ENCODE measurements at regions of chrX and their contacts with region 1.

Region 1: DNA sequence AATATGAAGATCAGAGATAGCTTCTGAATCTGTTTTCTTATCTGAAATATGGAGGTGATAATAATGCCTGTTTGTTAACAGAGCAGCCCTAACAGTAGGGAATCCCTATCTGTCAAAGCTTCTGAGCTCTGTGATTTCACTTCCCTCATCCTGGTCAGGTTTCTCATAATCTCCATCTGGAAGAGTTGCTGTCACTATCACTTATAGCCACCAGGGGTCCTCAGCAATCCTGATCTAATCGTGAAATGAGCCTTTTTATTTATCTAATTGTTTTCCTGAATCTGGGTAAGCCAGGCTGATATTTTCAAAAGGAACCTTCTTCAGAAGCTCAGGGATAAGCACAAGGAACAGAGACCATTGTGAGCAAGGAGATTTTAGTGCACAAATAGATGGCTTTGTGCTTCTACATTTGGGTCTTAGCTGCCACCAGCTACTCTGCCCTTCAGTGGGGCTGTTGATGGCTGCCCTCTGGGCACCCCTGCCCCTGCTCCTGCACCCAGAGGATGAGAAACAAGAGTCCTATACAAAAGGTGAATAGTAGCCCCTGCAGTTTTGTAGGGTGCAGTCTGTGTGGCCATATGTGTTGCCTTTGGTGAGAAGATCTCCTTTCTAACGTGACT is 196.4 kb upstream of the RADX start:
- DNase-seq: peak in 3 of 9 donors; percentile 4 to 17 (median 12)
- ATAC-seq: no peak
- H3K4me3 ChIP-seq: no peak overlapping the region
- H3K4me3 Mint-ChIP-seq: no peak overlapping the region
- H3K27ac ChIP-seq: no peak overlapping the region
- H3K27ac Mint-ChIP-seq: no peak overlapping the region
- H3K4me1 ChIP-seq: no peaks in the 10 kb centered on the region
- H3K4me1 Mint-ChIP-seq: no peaks in the 10 kb centered on the region
- H3K27me3 ChIP-seq: no peaks in the 10 kb centered on the region
- H3K27me3 Mint-ChIP-seq: no peaks in the 10 kb centered on the region

Region 2: GRCh38 chrX:106118786-106119185 is 296.6 kb before region 1 on chrX:
- CTCF ChIA-PET with region 1: no interaction called
- POLR2A ChIA-PET with region 1: no interaction called
- intact Hi-C with region 1: no loop called
- DNase-seq: no peak
- ATAC-seq: no peak
- H3K4me3 ChIP-seq: no peak overlapping the region
- H3K4me3 Mint-ChIP-seq: no peak overlapping the region
- H3K27ac ChIP-seq: no peak overlapping the region
- H3K27ac Mint-ChIP-seq: no peak overlapping the region
- H3K4me1 ChIP-seq: no peaks in the 10 kb centered on the region
- H3K4me1 Mint-ChIP-seq: no peaks in the 10 kb centered on the region
- H3K27me3 ChIP-seq: no peaks in the 10 kb centered on the region
- H3K27me3 Mint-ChIP-seq: no peaks in the 10 kb centered on the region

Region 3: GRCh38 chrX:106619797-106620196 is 204.4 kb after region 1 on chrX:
- CTCF ChIA-PET with region 1: interaction called, 3 read pairs
- POLR2A ChIA-PET with region 1: no interaction called
- intact Hi-C with region 1: loop called in 1 of 2 experiments (anchors 5 kb)
- DNase-seq: no peak
- ATAC-seq: no peak
- H3K4me3 ChIP-seq: no peak overlapping the region
- H3K4me3 Mint-ChIP-seq: no peak overlapping the region
- H3K27ac ChIP-seq: no peak overlapping the region
- H3K27ac Mint-ChIP-seq: no peak overlapping the region
- H3K4me1 ChIP-seq: no peaks in the 10 kb centered on the region
- H3K4me1 Mint-ChIP-seq: peaks cover 0 to 9% (median 5%) of the 10 kb centered on the region in 7 donors
- H3K27me3 ChIP-seq: no peaks in the 10 kb centered on the region
- H3K27me3 Mint-ChIP-seq: no peaks in the 10 kb centered on the region

Region 4: DNA sequence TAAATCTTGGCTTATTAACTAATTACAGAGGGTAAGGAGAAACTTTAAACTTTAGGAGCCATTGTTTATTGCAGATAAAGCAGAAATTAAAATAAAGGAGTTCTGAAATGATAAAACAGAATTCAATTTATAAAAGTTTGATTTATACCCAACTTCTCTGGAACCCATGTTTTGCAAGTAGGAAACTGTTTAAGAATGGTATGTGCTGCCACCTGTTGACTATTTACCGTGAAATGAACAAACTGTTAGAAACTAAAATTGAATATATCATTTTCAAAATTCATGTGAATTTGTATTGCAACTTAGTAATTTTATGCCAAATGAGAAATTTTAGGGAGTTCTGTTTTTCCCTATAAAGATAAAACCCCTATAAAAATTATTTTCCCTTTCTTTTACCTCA is 376.1 kb after region 1 on chrX:
- CTCF ChIA-PET with region 1: no interaction called
- POLR2A ChIA-PET with region 1: no interaction called
- intact Hi-C with region 1: loop called in 1 of 2 experiments (anchors 1 kb)
- DNase-seq: peak in 1 of 9 donors; percentile 1
- ATAC-seq: no peak
- H3K4me3 ChIP-seq: no peak overlapping the region
- H3K4me3 Mint-ChIP-seq: no peak overlapping the region
- H3K27ac ChIP-seq: no peak overlapping the region
- H3K27ac Mint-ChIP-seq: no peak overlapping the region
- H3K4me1 ChIP-seq: no peaks in the 10 kb centered on the region
- H3K4me1 Mint-ChIP-seq: no peaks in the 10 kb centered on the region
- H3K27me3 ChIP-seq: no peaks in the 10 kb centered on the region
- H3K27me3 Mint-ChIP-seq: no peaks in the 10 kb centered on the region

Region 5: GRCh38 chrX:107154787-107155620 is 739.6 kb after region 1 on chrX:
- CTCF ChIA-PET with region 1: no interaction called
- POLR2A ChIA-PET with region 1: no interaction called
- intact Hi-C with region 1: no loop called
- DNase-seq: peak in 2 of 9 donors; percentile 5 to 27
- ATAC-seq: peak; percentile 46
- H3K4me3 ChIP-seq: no peak overlapping the region
- H3K4me3 Mint-ChIP-seq: peak overlapping the region; percentile 66 to 86 (median 77)
- H3K27ac ChIP-seq: no peak overlapping the region
- H3K27ac Mint-ChIP-seq: peak overlapping the region in 5 of 9 donors; percentile 55 to 86 (median 72)
- H3K4me1 ChIP-seq: no peaks in the 10 kb centered on the region
- H3K4me1 Mint-ChIP-seq: peaks cover 0 to 15% (median 5%) of the 10 kb centered on the region in 7 donors
- H3K27me3 ChIP-seq: no peaks in the 10 kb centered on the region
- H3K27me3 Mint-ChIP-seq: no peaks in the 10 kb centered on the region

Region 6: GRCh38 chrX:107213477-107213876 is 798.1 kb after region 1 on chrX:
- CTCF ChIA-PET with region 1: no interaction called
- POLR2A ChIA-PET with region 1: no interaction called
- intact Hi-C with region 1: no loop called
- DNase-seq: no peak
- ATAC-seq: no peak
- H3K4me3 ChIP-seq: no peak overlapping the region
- H3K4me3 Mint-ChIP-seq: no peak overlapping the region
- H3K27ac ChIP-seq: no peak overlapping the region
- H3K27ac Mint-ChIP-seq: no peak overlapping the region
- H3K4me1 ChIP-seq: no peaks in the 10 kb centered on the region
- H3K4me1 Mint-ChIP-seq: no peaks in the 10 kb centered on the region
- H3K27me3 ChIP-seq: no peaks in the 10 kb centered on the region
- H3K27me3 Mint-ChIP-seq: peaks cover 0 to 19% (median 0%) of the 10 kb centered on the region in 5 donors